Right cardiac atrium (tissue), 5 donors: ENCODE measurements at regions of chr3 and their contacts with region 1.

Region 1: DNA sequence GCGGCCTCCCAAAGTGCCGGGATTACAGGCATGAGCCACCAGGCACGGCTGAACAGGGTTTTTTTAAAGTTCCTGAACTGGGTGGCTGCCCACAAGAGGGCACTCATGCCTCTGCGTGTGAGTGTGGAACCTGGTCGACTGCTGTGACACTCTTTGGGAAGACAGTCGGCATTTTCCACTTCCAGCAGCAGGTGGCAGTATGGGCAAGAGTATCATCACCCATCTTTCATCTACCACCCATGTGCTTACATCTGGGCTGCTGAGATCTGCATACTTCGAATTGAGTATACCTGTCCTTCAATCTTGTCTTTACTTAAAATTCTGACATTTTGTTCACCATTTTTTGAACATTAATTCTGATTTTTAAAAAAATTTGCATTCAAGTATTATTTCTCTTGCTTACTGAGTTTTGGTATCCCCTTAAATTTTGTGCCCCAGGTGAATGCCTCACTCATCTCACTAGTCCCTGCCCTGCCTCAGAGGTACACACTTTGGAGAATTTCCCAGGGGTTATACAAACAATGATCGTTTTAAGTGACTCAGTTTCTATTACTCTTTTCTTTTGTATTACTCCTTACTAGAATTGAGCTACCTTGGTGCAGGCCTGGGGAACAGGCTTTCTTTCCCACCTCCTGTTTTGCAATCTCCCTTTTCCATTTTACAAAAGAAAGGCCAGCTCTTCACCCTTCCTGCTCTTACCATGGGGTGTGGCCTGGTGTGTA is 11.8 kb downstream of the CLEC3B start:
- DNase-seq: peak; percentile 90 to 97 (median 94)
- ATAC-seq: peak; percentile 76 to 79
- H3K4me3 ChIP-seq: no peak overlapping the region
- H3K27ac ChIP-seq: no peak overlapping the region
- H3K4me1 ChIP-seq: peaks cover 2% of the 10 kb centered on the region
- H3K27me3 ChIP-seq: no peaks in the 10 kb centered on the region

Region 2: GRCh38 chr3:44988073-44988472 is 49.8 kb before region 1 on chr3:
- intact Hi-C with region 1: loop called in 1 of 4 experiments (anchors 10 kb)
- DNase-seq: no peak
- ATAC-seq: no peak
- H3K4me3 ChIP-seq: no peak overlapping the region
- H3K27ac ChIP-seq: no peak overlapping the region
- H3K4me1 ChIP-seq: peaks cover 2% of the 10 kb centered on the region
- H3K27me3 ChIP-seq: no peaks in the 10 kb centered on the region

Region 3: DNA sequence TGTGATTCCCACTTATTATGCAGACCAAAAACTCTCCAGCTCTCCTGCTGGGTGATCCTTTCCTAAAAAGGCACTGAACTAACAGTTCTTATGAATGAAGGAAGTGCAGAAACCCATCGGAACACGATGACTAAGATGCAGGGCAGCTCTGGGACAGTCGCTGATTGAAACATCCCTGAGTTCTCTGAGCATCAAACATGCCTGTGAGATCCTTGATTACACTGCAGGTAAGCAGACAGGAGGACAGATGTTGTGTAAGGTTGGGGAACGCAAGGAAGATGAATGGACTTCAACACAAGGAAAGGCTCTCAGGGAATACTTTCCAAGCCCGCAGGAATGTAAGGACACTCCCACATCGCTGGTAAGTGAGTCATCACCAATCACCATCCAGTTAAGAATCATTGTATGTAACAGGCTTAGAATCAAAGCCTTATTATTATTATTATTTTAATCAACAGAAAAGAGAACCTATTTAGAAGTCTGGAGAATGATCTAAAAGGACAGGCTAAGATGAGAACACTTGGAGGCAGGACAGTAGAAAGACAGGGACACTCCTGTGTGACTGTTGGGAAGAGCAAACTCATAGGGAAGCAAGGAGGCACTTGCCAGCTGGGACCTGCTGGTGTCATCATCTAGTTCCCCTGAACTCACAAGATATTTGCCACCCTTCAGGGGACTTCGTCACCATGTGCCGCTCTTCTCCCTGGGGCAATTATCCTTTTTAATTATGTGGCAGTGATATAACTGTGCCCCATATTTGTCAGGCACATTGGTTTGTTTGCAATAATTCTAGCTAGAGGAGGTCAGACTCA is 162.1 kb after region 1 on chr3:
- intact Hi-C with region 1: no loop called
- DNase-seq: no peak
- ATAC-seq: no peak
- H3K4me3 ChIP-seq: no peak overlapping the region
- H3K27ac ChIP-seq: no peak overlapping the region
- H3K4me1 ChIP-seq: no peaks in the 10 kb centered on the region
- H3K27me3 ChIP-seq: no peaks in the 10 kb centered on the region